ENCODE measurements at regions of chr22 and their contacts with region 1.

Region 1: DNA sequence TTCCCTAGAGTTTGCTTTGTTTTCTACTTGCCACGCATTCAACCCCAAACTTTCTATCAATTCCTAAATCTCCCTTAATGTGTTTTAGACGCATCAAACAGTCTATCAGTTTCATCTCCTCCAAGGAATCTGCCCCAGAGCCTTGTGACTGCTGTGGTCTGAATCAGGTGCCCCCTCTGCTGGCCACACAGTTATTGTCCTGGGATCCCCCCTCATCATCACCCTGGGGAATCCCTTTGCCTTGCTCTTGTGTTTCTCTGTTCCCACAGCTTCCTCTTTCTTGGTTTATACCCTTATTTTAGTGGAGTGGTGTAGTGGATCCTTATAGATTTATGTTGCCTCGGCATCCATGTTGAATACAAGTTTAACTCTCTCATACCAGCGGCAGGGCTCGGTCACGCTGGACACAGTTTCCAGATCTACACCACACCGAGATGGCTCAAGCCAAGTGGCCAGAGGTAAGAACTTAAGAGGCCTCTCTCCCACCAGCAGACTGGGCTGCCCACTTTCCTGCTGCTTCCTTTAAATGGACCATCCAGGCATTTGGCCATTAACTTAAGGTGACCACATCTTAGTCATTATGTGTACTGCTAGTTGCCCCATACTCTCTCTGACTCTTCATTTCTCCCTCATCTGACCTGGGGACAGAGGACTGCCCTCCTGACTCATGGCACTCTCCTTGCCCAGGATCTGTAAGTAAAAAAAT is 8.2 kb downstream of the UPB1 start:
- DNase-seq: peak in 3 of 5 donors; percentile 31 to 77 (median 44)
- H3K4me3 ChIP-seq: no peak overlapping the region
- H3K27ac ChIP-seq: no peak overlapping the region
- H3K4me1 ChIP-seq: peaks cover 0 to 30% (median 12%) of the 10 kb centered on the region in 3 donors
- H3K27me3 ChIP-seq: no peaks in the 10 kb centered on the region
- CTCF ChIP-seq: peak; percentile 52

Region 2: GRCh38 chr22:24402460-24403192 is 100.7 kb before region 1 on chr22:
- intact Hi-C with region 1: no loop called
- DNase-seq: peak in 4 of 5 donors; percentile 68 to 90 (median 84)
- H3K4me3 ChIP-seq: no peak overlapping the region
- H3K27ac ChIP-seq: peak overlapping the region; percentile 28 to 81
- H3K4me1 ChIP-seq: peaks cover 7 to 28% (median 14%) of the 10 kb centered on the region in 3 donors
- H3K27me3 ChIP-seq: no peaks in the 10 kb centered on the region
- CTCF ChIP-seq: no peak

Region 3: DNA sequence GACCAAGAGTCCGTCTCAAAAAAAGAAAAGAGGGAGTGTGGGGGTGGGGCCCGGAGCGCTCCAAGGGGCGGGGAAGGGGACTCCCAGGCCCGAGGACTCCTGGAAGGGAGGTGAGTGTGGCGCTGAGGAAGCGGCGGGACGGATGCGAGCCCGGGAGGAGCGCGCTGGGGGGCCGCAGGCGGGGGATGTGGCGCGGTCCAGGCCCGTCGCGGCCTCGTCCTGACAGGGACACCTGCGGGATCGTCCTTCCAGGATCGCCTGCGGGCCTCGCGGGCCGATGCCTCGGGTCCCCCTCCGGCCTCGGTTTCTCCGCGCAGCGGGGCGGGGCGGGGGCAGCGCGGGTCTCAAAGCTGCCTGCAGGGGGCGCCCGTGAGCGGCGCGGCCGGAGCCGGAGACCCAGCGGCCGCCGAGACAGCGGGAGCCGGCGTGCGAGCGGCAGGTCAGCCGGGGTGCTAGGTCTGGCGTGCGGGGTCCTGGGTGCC is 79.7 kb before region 1 on chr22:
- intact Hi-C with region 1: loop called (anchors 10 kb)
- DNase-seq: peak in 4 of 5 donors; percentile 46 to 73 (median 60)
- H3K4me3 ChIP-seq: peak overlapping the region in 1 of 3 donors; percentile 32
- H3K27ac ChIP-seq: no peak overlapping the region
- H3K4me1 ChIP-seq: peaks cover 0 to 11% (median 0%) of the 10 kb centered on the region in 3 donors
- H3K27me3 ChIP-seq: peaks cover 3% of the 10 kb centered on the region
- CTCF ChIP-seq: peak; percentile 79

Region 4: GRCh38 chr22:24466716-24467328 is 36.5 kb before region 1 on chr22:
- intact Hi-C with region 1: no loop called
- DNase-seq: peak in 3 of 5 donors; percentile 47 to 91 (median 70)
- H3K4me3 ChIP-seq: no peak overlapping the region
- H3K27ac ChIP-seq: peak overlapping the region in 1 of 2 donors; percentile 28
- H3K4me1 ChIP-seq: peaks cover 2 to 26% (median 14%) of the 10 kb centered on the region in 3 donors
- H3K27me3 ChIP-seq: no peaks in the 10 kb centered on the region
- CTCF ChIP-seq: no peak

Region 5: GRCh38 chr22:24554313-24555156 is 51.2 kb after region 1 on chr22 and contains the start of gene GUCD1:
- intact Hi-C with region 1: no loop called
- DNase-seq: peak in 4 of 5 donors; percentile 39 to 74 (median 57)
- H3K4me3 ChIP-seq: peak within 1 kb of the TSS; percentile 80 to 98 (median 96)
- H3K27ac ChIP-seq: peak within 1 kb of the TSS; percentile 99
- H3K4me1 ChIP-seq: peaks cover 3 to 39% (median 36%) of the 10 kb centered on the region in 3 donors
- H3K27me3 ChIP-seq: no peaks in the 10 kb centered on the region
- CTCF ChIP-seq: no peak
- total RNA-seq, gene GUCD1: 150 TPM

Measured in kidney (tissue), 22 donors.